ENCODE measurements at regions of chr20 and their contacts with region 1.

Region 1: DNA sequence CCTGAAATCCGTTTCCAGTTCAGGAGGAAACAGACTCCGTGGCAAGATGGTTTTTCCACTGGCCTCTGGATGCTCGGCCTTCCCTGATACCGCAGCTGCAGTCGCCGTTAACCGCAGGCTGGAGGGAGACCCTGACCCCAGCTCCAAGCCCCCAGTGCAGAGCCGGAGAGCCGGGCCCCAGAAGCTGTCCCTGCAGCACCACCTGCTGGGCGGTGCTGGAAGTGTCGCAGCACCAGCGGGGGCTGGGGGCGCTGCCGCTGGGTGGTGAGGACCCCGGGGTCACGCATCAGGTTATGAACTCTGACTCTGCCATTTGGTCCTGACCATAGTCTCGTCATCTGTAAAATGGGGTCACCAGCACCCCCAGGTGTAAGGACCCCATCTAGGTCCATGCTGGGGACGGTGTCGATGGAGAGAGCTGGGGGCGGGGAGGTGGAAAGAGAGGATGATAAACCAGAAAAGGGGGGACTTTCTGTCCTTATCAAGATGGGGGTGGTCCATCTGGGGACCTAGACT is 20.7 kb upstream of the CHRNA4 start:
- DNase-seq: peak; percentile 59
- ATAC-seq: peak; percentile 58
- H3K4me3 Mint-ChIP-seq: no peak overlapping the region
- H3K27ac Mint-ChIP-seq: no peak overlapping the region
- H3K4me1 Mint-ChIP-seq: no peaks in the 10 kb centered on the region
- H3K27me3 Mint-ChIP-seq: peaks cover 13% of the 10 kb centered on the region

Region 2: DNA sequence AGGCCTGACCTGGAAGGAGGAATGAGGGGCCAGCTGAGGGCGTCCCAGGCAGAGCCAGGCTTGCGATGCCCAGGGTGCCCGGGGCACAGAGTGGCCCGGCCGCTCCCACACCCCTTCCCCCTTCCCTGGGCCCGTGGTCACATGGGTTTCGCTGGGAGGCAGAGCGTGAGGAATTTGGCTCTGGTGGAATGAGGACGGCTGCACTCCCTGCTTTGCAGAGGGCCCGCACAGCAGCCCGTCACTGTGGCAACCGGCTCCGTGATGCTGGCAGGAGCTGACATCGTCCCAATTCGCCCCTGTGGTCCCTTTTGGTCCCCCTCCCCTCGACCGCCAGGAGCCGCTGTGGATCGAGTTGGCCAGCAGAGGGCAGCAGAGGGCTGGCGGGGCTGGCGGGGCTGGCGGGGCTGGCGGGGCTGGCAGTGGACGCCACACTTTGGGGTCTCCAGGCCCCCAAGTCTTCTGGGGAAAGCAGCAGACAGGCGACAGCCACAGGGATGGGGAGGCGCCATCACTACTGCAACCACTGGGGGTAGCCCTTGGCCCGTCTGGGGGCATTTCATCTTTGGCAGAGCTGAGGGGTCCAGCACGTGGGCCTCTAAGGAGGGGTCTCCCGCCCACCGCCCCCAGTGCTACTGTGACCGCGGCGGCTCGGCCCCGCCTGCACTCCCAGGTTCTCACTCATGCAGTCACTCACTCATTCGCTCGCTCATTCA is 325.5 kb before region 1 on chr20:
- CTCF ChIA-PET with region 1: no interaction called
- POLR2A ChIA-PET with region 1: no interaction called
- intact Hi-C with region 1: loop called in 1 of 2 experiments (anchors 5 kb)
- DNase-seq: peak; percentile 71
- ATAC-seq: peak; percentile 71
- H3K4me3 Mint-ChIP-seq: no peak overlapping the region
- H3K27ac Mint-ChIP-seq: no peak overlapping the region
- H3K4me1 Mint-ChIP-seq: no peaks in the 10 kb centered on the region
- H3K27me3 Mint-ChIP-seq: peaks cover 16% of the 10 kb centered on the region

Region 3: DNA sequence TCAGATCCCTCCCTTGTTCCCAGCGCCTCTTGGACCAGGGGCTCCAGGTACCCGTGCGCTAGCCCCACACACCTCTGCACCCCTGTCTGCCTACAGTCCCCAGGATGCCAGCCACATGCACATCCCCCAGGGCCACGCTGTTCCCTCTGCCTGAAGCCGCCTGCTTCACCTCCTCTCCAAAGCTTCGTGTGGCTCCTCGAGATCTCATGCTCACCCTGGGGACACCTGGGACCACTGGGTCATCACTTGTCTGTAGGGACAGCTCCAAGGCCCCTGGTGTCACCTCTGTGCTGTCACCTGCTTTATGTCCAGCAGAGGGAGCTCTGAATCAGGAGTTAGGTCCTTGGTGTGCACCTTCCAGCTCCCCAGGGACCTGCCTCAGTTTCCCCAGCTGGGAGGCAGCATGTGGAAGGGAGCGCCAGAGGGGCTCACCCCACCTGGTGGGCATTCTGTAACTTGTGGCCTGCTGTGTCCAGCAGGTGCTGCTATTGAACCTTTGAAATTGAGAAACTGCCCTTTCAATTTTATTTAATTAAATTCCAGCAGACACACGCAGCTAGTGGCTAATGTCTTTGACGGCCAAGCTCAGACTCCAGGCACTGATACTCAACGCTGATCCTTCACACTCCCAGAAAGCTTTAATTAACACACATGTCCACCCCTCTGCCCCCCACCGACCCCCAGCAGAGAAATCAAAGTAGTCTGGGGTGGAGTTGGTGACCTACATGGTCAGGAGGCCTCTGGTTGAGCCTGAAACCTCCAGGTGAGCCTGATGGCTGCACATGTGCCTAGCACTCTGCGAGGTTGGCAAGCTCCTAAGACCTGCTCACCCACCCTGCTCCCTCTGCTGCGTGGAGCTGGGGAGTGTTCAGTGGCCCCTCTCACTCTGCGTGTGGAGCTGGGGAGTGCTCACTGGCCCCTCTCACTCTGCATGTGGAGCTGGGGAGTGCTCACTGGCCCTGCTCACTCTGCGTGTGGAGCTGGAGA is 158.4 kb before region 1 on chr20:
- CTCF ChIA-PET with region 1: interaction called, 9 read pairs
- POLR2A ChIA-PET with region 1: interaction called, 5 read pairs
- intact Hi-C with region 1: loop called (anchors 1 to 2 kb)
- DNase-seq: peak; percentile 68
- ATAC-seq: peak; percentile 75
- H3K4me3 Mint-ChIP-seq: no peak overlapping the region
- H3K27ac Mint-ChIP-seq: no peak overlapping the region
- H3K4me1 Mint-ChIP-seq: no peaks in the 10 kb centered on the region
- H3K27me3 Mint-ChIP-seq: peaks cover 4% of the 10 kb centered on the region

Region 4: DNA sequence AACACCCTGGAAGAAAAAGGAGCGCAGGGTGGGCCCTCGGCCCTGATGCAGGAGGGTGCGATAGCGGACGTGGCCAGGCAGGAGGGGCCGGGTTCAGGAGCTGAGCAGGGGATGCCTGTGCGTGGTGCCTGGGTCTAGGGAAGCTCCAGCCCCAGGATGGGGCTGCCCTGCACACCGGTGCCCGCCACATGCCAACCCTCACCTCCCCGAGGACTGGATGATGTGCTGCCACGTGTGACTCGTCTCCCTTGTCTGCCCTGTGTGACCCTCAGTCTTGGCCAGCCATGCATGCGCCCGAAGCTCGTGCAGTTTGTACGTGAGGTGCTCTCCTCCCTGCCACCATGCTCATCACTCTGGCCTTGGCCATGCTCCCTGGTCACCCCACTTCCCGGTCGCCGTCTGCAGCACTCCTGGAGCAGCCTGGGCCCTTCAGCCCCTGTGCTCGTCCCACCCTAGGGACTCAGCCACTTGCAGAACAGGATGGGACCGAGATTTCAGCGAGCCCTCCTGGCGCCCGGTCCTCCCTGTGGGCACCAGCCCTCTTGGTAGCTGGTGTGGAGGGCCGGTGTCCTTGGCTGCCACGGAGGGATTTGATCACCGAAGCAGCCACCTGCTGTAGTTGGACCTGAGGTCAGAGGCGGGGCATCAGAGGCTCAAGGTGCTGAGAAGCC is 93.1 kb before region 1 on chr20:
- CTCF ChIA-PET with region 1: no interaction called
- POLR2A ChIA-PET with region 1: no interaction called
- intact Hi-C with region 1: no loop called
- DNase-seq: no peak
- ATAC-seq: no peak
- H3K4me3 Mint-ChIP-seq: no peak overlapping the region
- H3K27ac Mint-ChIP-seq: no peak overlapping the region
- H3K4me1 Mint-ChIP-seq: peaks cover 3% of the 10 kb centered on the region
- H3K27me3 Mint-ChIP-seq: no peaks in the 10 kb centered on the region

Region 5: GRCh38 chr20:63309261-63310071 is 72.4 kb before region 1 on chr20:
- CTCF ChIA-PET with region 1: interaction called, 8 read pairs
- POLR2A ChIA-PET with region 1: no interaction called
- intact Hi-C with region 1: loop called (anchors 1 to 5 kb)
- DNase-seq: peak; percentile 61
- ATAC-seq: peak; percentile 51
- H3K4me3 Mint-ChIP-seq: no peak overlapping the region
- H3K27ac Mint-ChIP-seq: no peak overlapping the region
- H3K4me1 Mint-ChIP-seq: no peaks in the 10 kb centered on the region
- H3K27me3 Mint-ChIP-seq: peaks cover 3% of the 10 kb centered on the region

Measured in activated CD4-positive, alpha-beta T cell treated with anti-CD3 and anti-CD28 coated beads for 36 hours (primary cell).